ENCODE measurements at regions of chr7 and their contacts with region 1.

Region 1: GRCh38 chr7:132318352-132319318 is 257.6 kb downstream of the PLXNA4 start:
- DNase-seq: peak; percentile 71
- H3K4me3 Mint-ChIP-seq: no peak overlapping the region
- H3K27ac Mint-ChIP-seq: no peak overlapping the region
- H3K4me1 Mint-ChIP-seq: peaks cover 14% of the 10 kb centered on the region
- H3K27me3 Mint-ChIP-seq: peaks cover 29% of the 10 kb centered on the region

Region 2: GRCh38 chr7:132394283-132395198 is 75.9 kb after region 1 on chr7:
- intact Hi-C with region 1: loop called (anchors 2 kb)
- DNase-seq: no peak
- H3K4me3 Mint-ChIP-seq: no peak overlapping the region
- H3K27ac Mint-ChIP-seq: no peak overlapping the region
- H3K4me1 Mint-ChIP-seq: peaks cover 20% of the 10 kb centered on the region
- H3K27me3 Mint-ChIP-seq: peaks cover 17% of the 10 kb centered on the region

Measured in activated T-helper 2 cell treated with anti-CD3 and anti-CD28 coated beads, Interferon-gamma antibody, Interleukin-2, Interleukin-4, amounts not matched to agents 10 μg/mL and 5 μg/mL and 100 μg/mL, durations not matched to agents 14 hours and 24 hours and 36 hours (primary cell).